ENCODE measurements at regions of chr4 and their contacts with region 1.

Region 1: GRCh38 chr4:20870436-20870835 is 170.2 kb downstream of the PACRGL start:
- DNase-seq: no peak
- ATAC-seq: no peak
- H3K4me3 ChIP-seq: no peak overlapping the region
- H3K27ac ChIP-seq: no peak overlapping the region
- H3K4me1 ChIP-seq: no peaks in the 10 kb centered on the region
- H3K27me3 ChIP-seq: no peaks in the 10 kb centered on the region
- CTCF ChIP-seq: no peak
- EP300 ChIP-seq: no peak
- POLR2A ChIP-seq: no peak
- RAD21 ChIP-seq: no peak

Region 2: GRCh38 chr4:20890761-20891160 is 20.3 kb after region 1 on chr4:
- CTCF ChIA-PET with region 1: no interaction called
- POLR2A ChIA-PET with region 1: no interaction called
- in situ Hi-C with region 1: no loop called
- intact Hi-C with region 1: loop called (anchors 1 kb)
- DNase-seq: no peak
- ATAC-seq: no peak
- H3K4me3 ChIP-seq: no peak overlapping the region
- H3K27ac ChIP-seq: no peak overlapping the region
- H3K4me1 ChIP-seq: no peaks in the 10 kb centered on the region
- H3K27me3 ChIP-seq: no peaks in the 10 kb centered on the region
- CTCF ChIP-seq: no peak
- EP300 ChIP-seq: no peak
- POLR2A ChIP-seq: no peak
- RAD21 ChIP-seq: no peak

Measured in K562 (cell line).